Esophagus squamous epithelium (tissue), 5 donors: ENCODE measurements at regions of chr13 and their contacts with region 1.

Region 1: GRCh38 chr13:44050450-44051063 is 170.9 kb downstream of the LACC1 start:
- DNase-seq: no peak
- H3K4me3 ChIP-seq: no peak overlapping the region
- H3K27ac ChIP-seq: no peak overlapping the region
- H3K4me1 ChIP-seq: peaks cover 0 to 3% (median 0%) of the 10 kb centered on the region in 3 donors
- H3K27me3 ChIP-seq: peaks cover 0 to 8% (median 0%) of the 10 kb centered on the region in 4 donors
- CTCF ChIP-seq: peak; percentile 41 to 85 (median 72)
- POLR2A ChIP-seq: no peak

Region 2: DNA sequence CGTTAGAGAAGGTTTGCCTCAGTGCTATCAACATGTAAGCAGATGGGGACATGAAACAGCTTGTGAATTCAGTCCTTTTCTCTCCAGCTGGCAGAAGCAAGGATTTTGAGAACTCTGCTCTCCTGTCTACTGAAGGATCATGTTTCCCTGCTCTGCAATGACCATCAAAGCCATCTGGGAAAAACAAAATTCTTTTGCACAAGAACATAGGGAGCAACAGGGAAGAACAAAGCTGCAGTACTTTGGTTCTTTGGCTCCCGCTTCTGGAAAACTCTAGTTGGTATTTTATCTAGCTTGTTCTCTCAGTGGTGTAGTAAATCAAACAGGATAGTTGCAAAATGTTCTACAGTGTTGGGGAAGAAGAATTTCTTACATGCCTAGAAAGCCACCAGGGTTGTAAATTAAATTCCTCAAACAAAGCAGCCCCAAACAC is 534.1 kb before region 1 on chr13:
- intact Hi-C with region 1: no loop called
- DNase-seq: no peak
- H3K4me3 ChIP-seq: no peak overlapping the region
- H3K27ac ChIP-seq: peak overlapping the region in 3 of 4 donors; percentile 50 to 63 (median 54)
- H3K4me1 ChIP-seq: peaks cover 0 to 18% (median 0%) of the 10 kb centered on the region in 3 donors
- H3K27me3 ChIP-seq: no peaks in the 10 kb centered on the region
- CTCF ChIP-seq: no peak
- POLR2A ChIP-seq: no peak

Region 3: GRCh38 chr13:43905435-43906031 is 145.0 kb before region 1 on chr13:
- intact Hi-C with region 1: loop called (anchors 5 kb)
- DNase-seq: no peak
- H3K4me3 ChIP-seq: no peak overlapping the region
- H3K27ac ChIP-seq: no peak overlapping the region
- H3K4me1 ChIP-seq: peaks cover 0 to 10% (median 0%) of the 10 kb centered on the region in 3 donors
- H3K27me3 ChIP-seq: peaks cover 0 to 3% (median 0%) of the 10 kb centered on the region in 4 donors
- CTCF ChIP-seq: peak; percentile 45 to 87 (median 78)
- POLR2A ChIP-seq: no peak

Region 4: GRCh38 chr13:44422755-44423532 is 372.4 kb after region 1 on chr13:
- intact Hi-C with region 1: loop called (anchors 10 kb)
- DNase-seq: no peak
- H3K4me3 ChIP-seq: no peak overlapping the region
- H3K27ac ChIP-seq: no peak overlapping the region
- H3K4me1 ChIP-seq: no peaks in the 10 kb centered on the region
- H3K27me3 ChIP-seq: no peaks in the 10 kb centered on the region
- CTCF ChIP-seq: no peak
- POLR2A ChIP-seq: no peak